Activated T-helper 2 cell treated with anti-CD3 and anti-CD28 coated beads, Interferon-gamma antibody, Interleukin-2, Interleukin-4, amounts not matched to agents 10 μg/mL and 5 μg/mL and 100 μg/mL, durations not matched to agents 14 hours and 24 hours and 36 hours (primary cell): ENCODE measurements at regions of chr15 and their contacts with region 1.

Region 1: DNA sequence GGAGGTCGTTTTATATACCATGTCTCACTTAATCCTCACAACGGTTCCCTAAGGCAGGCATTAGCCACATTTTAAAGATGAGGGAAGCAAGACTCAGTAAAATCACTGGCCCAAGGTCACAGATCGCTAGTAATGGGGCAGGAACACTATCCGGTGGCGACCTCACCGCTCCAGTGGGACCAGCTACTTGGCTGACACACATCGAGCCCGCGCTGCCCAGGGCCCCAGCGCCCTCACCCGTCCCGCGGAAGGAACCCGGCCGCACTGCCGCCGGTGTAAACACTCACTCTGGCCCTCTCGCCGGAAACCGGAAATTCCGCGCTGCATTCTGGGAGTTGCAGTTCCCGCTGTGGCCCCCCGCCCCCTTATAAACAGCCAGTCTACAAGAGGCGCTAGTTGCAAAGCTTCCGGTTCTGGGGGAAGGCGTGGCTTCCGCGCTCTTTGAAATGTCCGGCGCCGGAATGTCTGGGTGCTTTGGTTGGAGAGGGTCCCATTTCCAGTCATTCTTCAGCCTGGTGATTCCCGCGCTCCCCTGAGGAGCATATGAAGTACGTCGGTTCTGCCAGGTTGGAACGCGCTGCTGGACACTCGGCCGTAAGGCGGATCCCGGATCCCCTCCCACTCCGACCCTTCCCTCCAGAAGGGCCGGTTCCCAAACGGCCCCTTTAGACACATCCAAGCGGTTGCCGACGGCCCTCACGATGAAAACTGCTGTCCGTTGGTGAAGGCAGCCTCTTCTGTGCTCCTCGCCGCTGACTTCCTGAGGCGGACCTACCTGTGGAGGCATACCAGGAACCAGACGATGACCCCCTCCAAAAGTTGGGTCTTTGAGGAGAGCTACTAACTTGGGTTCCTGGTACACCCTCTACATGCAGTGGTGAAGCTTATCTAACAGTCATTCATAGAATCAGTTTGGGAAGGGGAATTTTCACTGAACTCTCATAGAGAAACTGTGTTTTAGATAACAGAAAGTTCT is at the start of gene UBL7:
- DNase-seq: peak; percentile 95
- H3K4me3 Mint-ChIP-seq: peak within 1 kb of the TSS; percentile 96
- H3K27ac Mint-ChIP-seq: peak within 1 kb of the TSS; percentile 96
- H3K4me1 Mint-ChIP-seq: peaks cover 44% of the 10 kb centered on the region
- H3K27me3 Mint-ChIP-seq: no peaks in the 10 kb centered on the region
- total RNA-seq, gene UBL7: 55.3 and 59.1 TPM in 2 replicates

Region 2: DNA sequence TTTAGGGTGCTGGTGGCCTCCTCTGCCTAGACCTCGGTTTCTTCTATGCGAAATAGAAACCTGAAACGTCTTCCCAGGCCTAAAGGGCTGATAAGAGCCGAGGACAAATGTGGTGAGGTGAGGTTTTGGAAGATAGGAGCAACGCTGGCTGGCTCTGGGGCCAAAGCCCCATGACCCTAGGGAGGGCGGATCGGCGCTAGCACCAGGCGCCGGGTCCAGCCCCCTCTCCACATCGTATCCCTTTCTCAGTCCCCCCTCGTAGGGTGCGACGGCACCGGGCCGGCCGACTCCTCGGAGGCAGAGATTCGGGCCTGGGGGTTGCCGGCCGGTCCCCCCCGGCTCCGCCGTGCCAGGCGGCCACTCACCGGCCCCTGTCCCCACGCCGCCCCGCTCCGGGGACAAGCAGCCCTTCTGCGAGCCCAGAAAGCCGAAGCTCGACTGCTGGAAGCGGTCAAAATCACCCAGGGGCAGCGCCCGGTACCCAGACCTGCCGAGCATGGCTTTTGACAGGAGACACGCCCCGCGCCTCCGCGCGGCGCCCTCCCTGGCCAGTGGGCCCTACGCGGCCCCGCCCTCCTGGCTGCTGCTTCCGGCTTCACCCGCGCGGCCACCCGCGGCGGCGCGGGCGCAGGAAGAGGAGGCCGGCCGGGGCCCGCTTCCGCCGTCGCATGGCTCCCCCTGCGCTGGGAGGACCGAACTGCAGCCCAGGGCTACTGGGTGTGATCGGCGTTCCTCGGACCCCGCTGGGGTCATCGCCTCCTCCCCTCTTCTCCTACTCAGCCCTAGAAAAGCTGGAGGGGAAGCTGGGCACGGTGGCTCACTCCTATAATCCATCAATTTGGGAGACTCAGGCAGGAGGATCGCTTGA is 469.2 kb before region 1 on chr15 and contains the start of gene STOML1:
- intact Hi-C with region 1: loop called (anchors 10 kb)
- DNase-seq: peak; percentile 93
- H3K4me3 Mint-ChIP-seq: peak within 1 kb of the TSS; percentile 81
- H3K27ac Mint-ChIP-seq: peak within 1 kb of the TSS; percentile 85
- H3K4me1 Mint-ChIP-seq: peaks cover 35% of the 10 kb centered on the region
- H3K27me3 Mint-ChIP-seq: no peaks in the 10 kb centered on the region
- total RNA-seq, gene STOML1: 8.6 and 9.2 TPM in 2 replicates

Region 3: DNA sequence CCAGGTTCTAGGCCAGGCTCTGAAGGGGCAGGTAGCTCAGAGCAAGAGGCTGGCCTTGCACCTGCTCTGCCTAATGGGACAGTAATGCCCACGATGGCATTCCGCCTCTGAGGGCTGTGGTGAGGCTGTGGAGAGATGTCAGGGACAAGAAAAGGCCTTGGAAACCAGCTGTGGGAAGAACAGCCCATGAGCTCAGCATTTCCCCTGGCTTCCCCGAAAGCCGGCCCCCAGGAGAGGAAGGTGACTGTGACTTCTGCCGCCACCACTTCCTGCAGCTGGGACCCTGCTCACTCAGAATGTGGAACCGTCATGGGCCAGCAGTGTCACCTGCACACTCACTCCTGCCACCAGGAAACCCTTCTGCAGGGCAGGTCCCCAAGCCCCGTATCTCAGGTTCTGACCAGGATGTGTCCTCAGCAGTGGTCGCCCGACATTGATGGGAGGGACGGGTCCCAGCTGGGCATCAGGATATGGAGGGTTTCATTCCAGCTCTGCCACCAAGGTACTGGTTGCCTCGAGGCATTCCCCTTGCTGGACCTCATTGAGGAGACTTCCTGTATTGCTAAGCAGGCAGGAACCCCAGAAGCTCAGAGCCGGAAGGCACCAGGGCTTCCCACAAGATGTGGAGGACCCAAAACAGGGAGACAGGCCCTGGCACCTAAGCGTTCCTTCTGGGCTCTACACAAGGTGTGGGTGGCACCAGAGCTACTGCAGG is 58.1 kb before region 1 on chr15:
- intact Hi-C with region 1: loop called (anchors 1 kb)
- DNase-seq: peak; percentile 64
- H3K4me3 Mint-ChIP-seq: peak overlapping the region; percentile 3
- H3K27ac Mint-ChIP-seq: peak overlapping the region; percentile 84
- H3K4me1 Mint-ChIP-seq: peaks cover 70% of the 10 kb centered on the region
- H3K27me3 Mint-ChIP-seq: no peaks in the 10 kb centered on the region

Region 4: DNA sequence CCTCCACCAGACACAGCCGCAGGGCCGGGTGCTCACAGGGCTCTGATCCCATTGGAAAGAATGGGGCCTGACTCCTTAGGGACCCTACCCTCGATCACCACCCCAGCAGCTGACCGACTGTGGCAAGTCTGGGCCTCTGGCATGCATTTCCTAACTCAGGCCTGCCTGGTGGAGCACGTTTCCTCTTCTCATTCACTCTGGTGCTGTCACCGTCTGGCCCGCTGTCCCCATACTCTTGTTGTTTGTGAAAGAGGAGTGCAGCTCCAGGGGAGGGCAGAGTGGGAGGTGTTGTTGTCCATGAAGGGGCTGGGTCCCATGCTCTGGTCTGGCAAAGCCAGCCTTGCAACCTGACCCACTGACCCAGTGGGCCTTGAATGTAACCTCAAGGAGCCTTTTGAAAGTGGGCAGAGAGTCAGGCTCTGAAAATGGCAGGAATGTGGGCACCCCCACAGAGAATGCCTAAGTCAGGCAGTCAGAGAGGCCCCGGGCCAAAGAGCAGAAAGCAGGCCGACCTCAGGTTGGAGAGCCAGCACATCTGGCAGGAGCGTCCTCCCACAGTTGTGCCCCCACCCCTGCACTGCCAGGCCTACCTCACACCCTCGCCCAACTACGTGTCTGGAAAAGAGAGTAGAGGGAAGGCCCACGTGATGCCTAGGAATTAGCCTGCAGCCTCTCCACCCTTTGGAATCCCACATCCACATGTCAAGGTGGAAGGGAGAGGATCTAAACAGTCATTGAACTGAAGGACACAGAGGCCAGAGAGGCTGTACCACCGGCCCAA is 38.3 kb before region 1 on chr15:
- intact Hi-C with region 1: no loop called
- DNase-seq: no peak
- H3K4me3 Mint-ChIP-seq: no peak overlapping the region
- H3K27ac Mint-ChIP-seq: no peak overlapping the region
- H3K4me1 Mint-ChIP-seq: peaks cover 30% of the 10 kb centered on the region
- H3K27me3 Mint-ChIP-seq: no peaks in the 10 kb centered on the region

Region 5: DNA sequence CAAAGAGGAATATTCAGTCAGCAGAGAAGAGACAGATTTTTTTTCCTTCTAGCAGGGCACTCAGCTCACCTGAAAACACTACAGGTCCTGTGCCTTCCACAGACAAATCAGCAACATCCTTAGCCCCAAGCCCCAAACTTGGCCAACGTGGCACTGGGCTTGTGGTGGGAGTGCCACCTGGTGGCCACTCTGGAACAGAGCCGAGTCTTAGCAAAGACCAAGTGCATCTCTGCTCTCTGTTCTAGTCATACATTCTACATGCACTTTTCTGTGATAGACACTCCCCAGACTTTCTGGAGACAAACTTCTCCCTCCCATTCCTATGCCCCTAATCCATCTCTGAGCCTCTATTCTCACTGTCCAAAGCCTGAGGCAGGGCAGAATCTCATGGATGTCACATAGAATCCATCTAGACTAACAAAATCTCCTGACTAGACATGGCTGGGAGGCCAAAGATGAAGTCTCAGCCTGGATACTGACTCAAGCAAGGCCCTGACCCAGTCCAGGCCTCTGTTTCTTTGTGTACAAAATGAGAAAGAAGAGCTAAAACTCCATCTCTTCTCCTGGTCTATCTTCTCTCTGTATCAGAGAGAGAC is 22.3 kb before region 1 on chr15:
- intact Hi-C with region 1: loop called (anchors 1 kb)
- DNase-seq: peak; percentile 67
- H3K4me3 Mint-ChIP-seq: no peak overlapping the region
- H3K27ac Mint-ChIP-seq: peak overlapping the region; percentile 35
- H3K4me1 Mint-ChIP-seq: peaks cover 39% of the 10 kb centered on the region
- H3K27me3 Mint-ChIP-seq: no peaks in the 10 kb centered on the region

Region 6: DNA sequence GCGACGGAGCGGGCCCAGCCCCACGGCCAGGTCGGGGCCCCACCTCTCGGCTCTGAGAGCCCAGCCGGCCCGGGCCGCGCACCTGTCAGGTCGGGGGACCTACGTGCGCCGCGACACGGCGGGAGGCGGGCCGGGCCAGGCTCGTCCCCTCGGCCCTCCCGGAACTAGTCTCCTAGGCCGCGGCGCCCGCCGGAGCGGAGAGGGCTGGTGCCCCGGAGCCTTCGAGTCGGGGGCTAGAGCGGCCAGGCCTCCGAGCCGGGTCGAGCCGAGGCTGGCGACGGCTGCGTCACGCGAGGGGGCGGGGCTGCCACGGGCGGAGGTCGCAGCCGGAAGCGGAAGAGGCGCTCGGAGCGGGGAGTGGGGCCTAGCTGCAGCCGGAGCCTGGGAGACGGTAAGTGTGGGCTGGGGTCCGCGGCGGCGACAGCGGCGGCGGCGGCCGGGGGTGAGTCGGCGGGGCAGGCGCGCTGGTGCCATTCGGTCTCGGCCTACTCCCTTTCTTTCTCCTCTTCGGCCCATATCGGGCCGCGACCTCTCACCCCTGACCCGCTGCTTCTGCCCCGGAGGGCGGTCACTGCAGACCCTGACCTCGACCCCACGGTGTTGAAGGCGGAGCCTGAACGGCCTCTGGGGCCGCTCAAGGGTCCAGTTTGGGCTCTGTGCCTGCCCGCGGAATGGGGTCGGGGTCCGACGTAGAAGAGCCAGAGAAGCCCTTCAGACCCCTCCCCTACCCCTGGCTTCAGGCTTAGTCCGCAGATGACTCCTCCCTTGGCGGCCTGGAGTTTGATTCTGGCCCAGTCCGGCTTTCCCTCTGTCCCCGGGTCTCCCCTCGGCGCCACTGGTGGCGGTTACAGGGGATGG is 154.6 kb after region 1 on chr15 and contains the start of gene CLK3:
- intact Hi-C with region 1: loop called (anchors 2 kb)
- DNase-seq: peak; percentile 95
- H3K4me3 Mint-ChIP-seq: peak within 1 kb of the TSS; percentile 96
- H3K27ac Mint-ChIP-seq: peak within 1 kb of the TSS; percentile 97
- H3K4me1 Mint-ChIP-seq: peaks cover 28% of the 10 kb centered on the region
- H3K27me3 Mint-ChIP-seq: no peaks in the 10 kb centered on the region
- total RNA-seq, gene CLK3: 119 and 122 TPM in 2 replicates